ENCODE measurements at regions of chr2 and their contacts with region 1.

Region 1: GRCh38 chr2:98822301-98823164 is 91.6 kb upstream of the MGAT4A start:
- DNase-seq: peak; percentile 54 to 74 (median 74)
- H3K4me3 ChIP-seq: peak overlapping the region; percentile 13 to 67 (median 43)
- H3K27ac ChIP-seq: no peak overlapping the region
- H3K4me1 ChIP-seq: peaks cover 8 to 28% (median 16%) of the 10 kb centered on the region in 4 experiments
- H3K27me3 ChIP-seq: peaks cover 0 to 8% (median 0%) of the 10 kb centered on the region in 5 experiments

Region 2: GRCh38 chr2:98656800-98657199 is 165.7 kb before region 1 on chr2:
- CTCF ChIA-PET with region 1: no interaction called
- POLR2A ChIA-PET with region 1: interaction called, 14 read pairs
- DNase-seq: peak in 1 of 3 donors; percentile 10
- H3K4me3 ChIP-seq: no peak overlapping the region
- H3K27ac ChIP-seq: no peak overlapping the region
- H3K4me1 ChIP-seq: peaks cover 2 to 20% (median 11%) of the 10 kb centered on the region in 4 experiments
- H3K27me3 ChIP-seq: no peaks in the 10 kb centered on the region

Region 3: GRCh38 chr2:98731041-98731893 is 91.3 kb before region 1 on chr2 and contains the start of gene MGAT4A:
- CTCF ChIA-PET with region 1: interaction called, 21 read pairs
- POLR2A ChIA-PET with region 1: no interaction called
- DNase-seq: peak; percentile 55 to 84 (median 75)
- H3K4me3 ChIP-seq: peak within 1 kb of the TSS; percentile 58 to 90 (median 77)
- H3K27ac ChIP-seq: peak within 1 kb of the TSS; percentile 54 to 82
- H3K4me1 ChIP-seq: peaks cover 38 to 65% (median 47%) of the 10 kb centered on the region in 4 experiments
- H3K27me3 ChIP-seq: no peaks in the 10 kb centered on the region

Measured in common myeloid progenitor, CD34-positive (primary cell).